ENCODE measurements at regions of chr11 and their contacts with region 1.

Region 1: DNA sequence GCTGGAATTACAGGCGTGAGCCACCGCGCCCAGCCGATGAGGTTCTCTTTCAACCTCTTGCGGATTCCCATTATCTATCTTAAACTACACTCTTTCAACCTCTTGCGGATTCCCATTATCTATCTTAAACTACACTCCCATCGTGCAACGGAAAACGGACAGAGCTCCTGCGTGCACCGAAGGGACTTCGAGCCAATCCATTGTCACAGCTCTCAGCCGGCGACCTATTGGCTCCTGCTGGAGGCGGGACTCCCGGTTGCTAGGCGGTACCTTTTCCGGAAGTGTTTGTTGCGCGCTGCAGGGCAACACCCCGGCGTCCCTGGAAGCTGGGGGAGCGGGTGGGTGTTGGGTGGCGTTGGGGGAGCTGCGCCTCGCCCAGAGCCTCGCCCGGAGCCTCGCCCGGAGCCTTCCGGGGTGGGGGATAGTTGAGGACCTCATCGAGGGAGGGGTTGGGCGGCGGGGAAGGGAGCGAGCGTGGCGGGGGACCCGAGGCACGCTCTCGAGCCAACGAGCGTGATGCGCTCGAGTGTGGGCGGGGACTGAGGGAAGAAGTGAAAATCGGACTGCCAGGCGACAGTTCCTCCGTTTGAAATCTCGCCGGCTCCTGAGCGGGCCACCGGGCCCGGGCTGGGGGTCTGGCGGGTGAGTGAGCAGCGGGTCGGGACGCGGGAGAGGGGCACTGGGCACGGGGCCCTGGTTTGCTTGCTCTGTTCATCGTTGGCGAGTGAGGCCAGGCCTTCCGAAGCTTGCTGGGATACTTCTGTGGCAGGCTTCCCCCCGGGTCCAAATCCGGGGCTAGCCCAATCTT is at the start of gene CEP164:
- DNase-seq: peak; percentile 93
- H3K4me3 Mint-ChIP-seq: peak within 1 kb of the TSS; percentile 75
- H3K27ac Mint-ChIP-seq: peak within 1 kb of the TSS; percentile 45
- H3K4me1 Mint-ChIP-seq: peaks cover 9% of the 10 kb centered on the region
- H3K27me3 Mint-ChIP-seq: peaks cover 9% of the 10 kb centered on the region
- total RNA-seq, gene CEP164: 37.2 and 43.5 TPM in 2 replicates

Region 2: DNA sequence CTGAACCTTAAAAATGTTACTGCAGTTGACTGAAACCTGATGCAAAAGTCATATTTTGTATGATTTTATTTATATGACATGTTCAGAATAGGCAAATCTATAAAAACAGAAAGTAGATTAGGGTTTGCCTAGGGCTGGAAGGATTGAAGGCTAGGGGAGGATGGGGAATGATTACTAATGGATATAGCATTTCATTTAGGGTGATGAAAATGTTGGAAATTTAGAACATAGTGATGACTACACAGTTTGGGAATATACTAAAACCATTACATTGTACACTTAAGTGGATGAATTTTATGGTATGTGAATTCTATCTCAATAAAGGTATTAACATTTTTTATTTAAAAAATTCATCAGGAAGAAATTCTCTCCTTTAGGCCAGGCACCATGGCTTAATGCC is 206.6 kb before region 1 on chr11:
- intact Hi-C with region 1: no loop called
- DNase-seq: no peak
- H3K4me3 Mint-ChIP-seq: no peak overlapping the region
- H3K27ac Mint-ChIP-seq: no peak overlapping the region
- H3K4me1 Mint-ChIP-seq: no peaks in the 10 kb centered on the region
- H3K27me3 Mint-ChIP-seq: peaks cover 5% of the 10 kb centered on the region

Region 3: DNA sequence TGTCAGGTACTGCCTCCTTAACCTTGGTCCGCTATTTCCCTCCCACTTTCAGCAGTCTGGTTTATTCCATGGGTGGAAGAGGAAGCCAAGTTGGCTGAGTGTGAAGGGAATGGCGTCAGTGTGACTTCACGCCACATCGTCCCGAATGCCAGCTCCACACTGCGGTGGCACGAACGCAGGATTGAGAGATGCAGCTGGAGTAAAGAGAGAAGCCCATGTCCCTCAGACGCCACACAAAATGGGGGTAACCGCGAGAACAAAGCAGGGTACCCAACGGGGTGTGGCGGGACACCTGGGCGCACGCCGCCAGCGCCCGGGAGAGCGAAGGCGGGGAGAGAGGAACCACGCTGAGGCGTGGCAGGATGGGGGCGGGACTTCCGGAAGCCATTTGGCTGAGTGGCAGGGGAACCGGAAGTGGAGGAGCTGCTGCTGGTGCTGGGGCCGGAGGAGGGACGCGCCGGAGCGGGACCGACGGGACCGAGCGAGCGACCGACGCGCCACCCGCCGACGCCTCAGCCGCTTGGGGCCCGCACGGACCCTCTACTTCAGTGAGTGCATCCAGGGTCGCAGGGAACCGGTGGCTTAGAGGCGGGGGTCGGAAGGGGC is 183.8 kb before region 1 on chr11 and contains the start of gene PAFAH1B2:
- intact Hi-C with region 1: loop called (anchors 2 kb)
- DNase-seq: peak; percentile 93
- H3K4me3 Mint-ChIP-seq: peak within 1 kb of the TSS; percentile 97
- H3K27ac Mint-ChIP-seq: peak within 1 kb of the TSS; percentile 90
- H3K4me1 Mint-ChIP-seq: peaks cover 29% of the 10 kb centered on the region
- H3K27me3 Mint-ChIP-seq: peaks cover 8% of the 10 kb centered on the region
- total RNA-seq, gene PAFAH1B2: 71.8 and 83.6 TPM in 2 replicates

Region 4: DNA sequence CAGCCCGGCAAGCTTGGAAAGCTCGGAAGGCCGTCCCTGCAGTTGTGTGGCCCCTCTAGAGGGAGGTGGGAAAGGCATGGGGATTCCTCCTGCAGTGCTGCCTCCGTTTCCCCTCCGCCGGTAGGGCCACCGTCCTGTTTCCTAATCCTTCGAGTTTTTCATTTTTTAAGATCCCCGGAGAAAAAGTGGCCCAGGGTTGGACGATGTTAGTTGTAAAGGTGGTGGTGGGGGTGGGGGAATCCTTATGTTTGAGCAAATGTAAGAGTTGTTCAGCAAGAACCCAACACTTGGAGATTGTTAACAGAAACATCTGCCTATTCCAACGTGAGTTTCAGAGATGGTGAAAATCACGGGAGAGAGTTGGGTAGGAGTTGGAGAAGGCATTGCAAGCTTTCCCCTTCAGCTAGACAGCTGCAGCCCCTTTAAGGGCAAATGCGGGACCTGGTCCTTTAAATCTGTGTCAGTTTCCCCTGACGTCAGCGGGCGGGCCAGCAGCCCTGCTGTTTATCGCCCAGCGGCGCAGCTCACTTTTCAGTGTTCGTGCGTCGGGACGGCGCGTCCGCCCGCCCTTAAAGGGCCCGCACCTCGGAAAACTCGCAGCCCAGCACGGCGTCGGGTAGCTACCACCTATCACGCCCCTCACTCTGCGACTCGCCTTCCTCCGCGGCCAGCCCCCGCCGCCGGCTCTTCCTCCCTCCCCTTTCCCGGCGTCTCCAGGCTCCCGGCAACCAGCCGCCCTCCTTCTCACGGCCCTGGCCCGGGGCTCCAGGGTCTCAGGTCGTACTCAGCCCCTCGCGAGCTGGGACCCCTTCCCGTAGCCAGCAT is 149.3 kb before region 1 on chr11 and contains the start of gene SIDT2:
- intact Hi-C with region 1: loop called (anchors 1 kb)
- DNase-seq: peak; percentile 89
- H3K4me3 Mint-ChIP-seq: peak within 1 kb of the TSS; percentile 95
- H3K27ac Mint-ChIP-seq: peak within 1 kb of the TSS; percentile 86
- H3K4me1 Mint-ChIP-seq: peaks cover 33% of the 10 kb centered on the region
- H3K27me3 Mint-ChIP-seq: no peaks in the 10 kb centered on the region
- total RNA-seq, gene SIDT2: 24.3 and 32.2 TPM in 2 replicates

Region 5: GRCh38 chr11:117817368-117818040 is 489.7 kb after region 1 on chr11:
- intact Hi-C with region 1: loop called (anchors 5 kb)
- DNase-seq: peak; percentile 83
- H3K4me3 Mint-ChIP-seq: peak overlapping the region; percentile 70
- H3K27ac Mint-ChIP-seq: peak overlapping the region; percentile 98
- H3K4me1 Mint-ChIP-seq: peaks cover 79% of the 10 kb centered on the region
- H3K27me3 Mint-ChIP-seq: no peaks in the 10 kb centered on the region

Region 6: GRCh38 chr11:117907251-117907981 is 579.6 kb after region 1 on chr11:
- intact Hi-C with region 1: loop called (anchors 5 kb)
- DNase-seq: peak; percentile 68
- H3K4me3 Mint-ChIP-seq: peak overlapping the region; percentile 68
- H3K27ac Mint-ChIP-seq: peak overlapping the region; percentile 67
- H3K4me1 Mint-ChIP-seq: peaks cover 12% of the 10 kb centered on the region
- H3K27me3 Mint-ChIP-seq: no peaks in the 10 kb centered on the region

Region 7: GRCh38 chr11:118401151-118401878 is 1073.5 kb after region 1 on chr11 and contains the start of gene ATP5MG:
- intact Hi-C with region 1: loop called (anchors 5 kb)
- DNase-seq: peak; percentile 87
- H3K4me3 Mint-ChIP-seq: peak within 1 kb of the TSS; percentile 93
- H3K27ac Mint-ChIP-seq: peak within 1 kb of the TSS; percentile 96
- H3K4me1 Mint-ChIP-seq: peaks cover 68% of the 10 kb centered on the region
- H3K27me3 Mint-ChIP-seq: no peaks in the 10 kb centered on the region
- total RNA-seq, gene ATP5MG: 205 and 216 TPM in 2 replicates

Region 8: DNA sequence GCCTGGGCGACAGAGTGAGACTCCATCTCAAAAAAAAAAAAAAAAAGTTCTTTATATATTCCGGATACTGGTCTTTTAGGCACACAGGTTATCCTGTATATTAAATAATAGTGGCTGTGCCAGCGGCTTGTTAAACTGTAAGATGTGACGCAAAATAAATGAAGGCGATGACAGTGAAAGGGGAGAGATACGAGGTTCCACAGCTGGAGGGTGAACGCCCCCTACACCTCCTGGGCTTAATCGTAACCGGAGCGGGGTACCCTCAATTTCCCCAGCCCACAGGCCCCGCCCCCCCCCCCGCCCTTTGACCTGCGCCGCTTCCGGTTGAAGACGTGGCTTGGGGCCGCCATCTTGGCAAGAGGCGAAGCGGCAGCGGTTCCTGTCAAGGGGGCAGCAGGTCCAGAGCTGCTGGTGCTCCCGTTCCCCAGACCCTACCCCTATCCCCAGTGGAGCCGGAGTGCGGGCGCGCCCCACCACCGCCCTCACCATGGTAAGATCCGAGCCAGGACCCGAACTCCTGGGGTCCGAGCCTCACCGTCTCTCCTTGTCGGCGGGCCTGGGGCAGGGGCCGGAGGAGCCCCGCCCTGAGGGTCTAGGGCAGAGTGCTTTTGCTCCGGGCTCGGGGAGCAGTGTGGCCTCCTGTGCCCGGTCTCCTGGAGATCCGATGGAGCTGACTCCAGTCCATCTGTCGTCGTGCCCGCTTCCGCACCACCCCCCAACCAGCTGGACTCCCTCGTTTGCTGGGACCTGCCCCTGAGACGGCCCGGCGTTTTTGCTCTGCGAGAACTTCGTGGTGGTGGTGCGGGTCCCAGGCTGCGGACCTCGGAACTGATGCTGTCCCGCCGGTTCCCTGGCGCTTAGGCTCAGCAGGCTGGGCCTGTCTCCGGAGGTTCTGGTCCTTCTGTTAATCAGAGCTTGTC is 1244.5 kb after region 1 on chr11 and contains the start of gene ARCN1:
- intact Hi-C with region 1: loop called (anchors 2 kb)
- DNase-seq: peak; percentile 69
- H3K4me3 Mint-ChIP-seq: peak within 1 kb of the TSS; percentile 98
- H3K27ac Mint-ChIP-seq: peak within 1 kb of the TSS; percentile 96
- H3K4me1 Mint-ChIP-seq: peaks cover 51% of the 10 kb centered on the region
- H3K27me3 Mint-ChIP-seq: no peaks in the 10 kb centered on the region
- total RNA-seq, gene ARCN1: 162 and 165 TPM in 2 replicates

Measured in activated T-helper 1 cell treated with anti-CD3 and anti-CD28 coated beads, Interleukin-12 subunit alpha, Interleukin-12 subunit beta, Interleukin-2, Interleukin-4 antibody, amounts not matched to agents 30 ng/mL and 10 ng/mL and 1 ng/mL, durations not matched to agents 14 hours and 24 hours and 36 hours (primary cell).